ENCODE measurements at regions of chr6 and their contacts with region 1.

Region 1: DNA sequence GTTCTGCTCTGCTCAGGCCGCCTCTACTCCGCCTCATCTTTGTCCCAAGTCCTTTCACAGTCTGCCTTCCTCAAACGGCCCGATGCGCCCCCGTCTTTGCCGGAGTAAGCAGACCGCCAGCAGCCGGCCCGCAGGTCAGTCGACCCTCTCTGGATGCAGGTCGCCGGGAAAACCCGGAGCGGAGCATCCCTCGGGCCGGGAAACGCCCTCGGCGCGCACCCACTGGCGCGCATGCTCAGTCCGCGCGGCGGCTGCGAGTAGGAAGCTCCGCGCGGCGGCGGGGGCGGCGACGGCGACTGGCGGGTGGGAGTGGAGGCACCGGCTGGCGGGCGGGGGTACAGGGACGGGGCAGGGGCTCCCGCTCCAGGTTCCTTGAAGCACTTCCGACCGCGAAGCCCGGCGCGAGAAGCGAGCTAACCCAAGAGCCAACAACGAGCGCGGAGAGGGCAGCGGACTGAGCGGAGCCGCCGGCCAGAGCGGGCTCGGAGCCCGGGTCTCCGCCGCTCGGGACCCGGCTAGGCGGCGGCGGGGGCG is at the start of gene LRRC1:
- DNase-seq: peak; percentile 95
- H3K4me3 ChIP-seq: peak within 1 kb of the TSS; percentile 80
- H3K27ac ChIP-seq: peak within 1 kb of the TSS; percentile 81
- H3K4me1 ChIP-seq: no peaks in the 10 kb centered on the region
- H3K27me3 ChIP-seq: no peaks in the 10 kb centered on the region
- CTCF ChIP-seq: no peak
- total RNA-seq, gene LRRC1: 49.6 to 72.9 TPM

Region 2: DNA sequence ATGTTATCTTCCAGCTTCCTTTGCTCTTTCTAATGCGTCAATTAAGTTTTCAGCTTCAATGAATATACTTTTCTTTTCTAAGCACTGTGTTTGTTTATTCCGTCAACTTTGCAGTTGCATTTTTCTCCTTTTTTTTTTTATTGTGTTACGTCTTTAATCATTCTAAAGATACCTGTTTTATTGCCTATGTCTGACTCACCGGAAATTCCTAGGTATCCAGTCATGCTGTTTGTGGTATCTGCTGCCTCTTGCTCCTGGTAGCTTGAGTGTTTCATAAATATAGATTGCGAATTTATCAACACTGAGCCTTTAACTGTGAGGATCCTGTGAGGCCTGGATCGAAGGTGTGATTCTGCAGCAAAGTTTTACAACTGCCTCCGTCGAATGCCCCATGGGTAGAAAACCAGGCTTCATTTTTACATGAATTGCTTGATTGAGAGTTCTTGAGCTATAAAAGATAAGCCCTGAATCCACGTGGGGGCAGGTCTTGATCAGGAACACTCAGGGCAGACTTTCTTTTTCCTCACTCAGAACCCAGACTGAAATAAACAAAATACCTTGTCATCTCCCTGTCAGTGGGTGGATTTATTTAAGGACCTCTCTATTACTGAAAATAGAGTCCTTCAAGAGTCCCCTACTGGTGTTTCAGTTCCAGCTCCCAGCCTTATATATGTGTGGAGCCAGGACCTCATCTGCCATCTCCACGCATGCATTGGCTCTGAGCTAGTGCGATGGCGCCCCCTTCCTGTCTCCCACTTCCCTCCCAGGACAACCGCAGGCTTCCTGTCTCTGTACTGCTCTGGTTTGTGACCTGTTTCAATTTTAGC is 60.1 kb before region 1 on chr6:
- intact Hi-C with region 1: loop called (anchors 5 kb)
- DNase-seq: peak; percentile 68
- H3K4me3 ChIP-seq: no peak overlapping the region
- H3K27ac ChIP-seq: peak overlapping the region; percentile 67
- H3K4me1 ChIP-seq: no peaks in the 10 kb centered on the region
- H3K27me3 ChIP-seq: no peaks in the 10 kb centered on the region
- CTCF ChIP-seq: peak; percentile 36

Region 3: DNA sequence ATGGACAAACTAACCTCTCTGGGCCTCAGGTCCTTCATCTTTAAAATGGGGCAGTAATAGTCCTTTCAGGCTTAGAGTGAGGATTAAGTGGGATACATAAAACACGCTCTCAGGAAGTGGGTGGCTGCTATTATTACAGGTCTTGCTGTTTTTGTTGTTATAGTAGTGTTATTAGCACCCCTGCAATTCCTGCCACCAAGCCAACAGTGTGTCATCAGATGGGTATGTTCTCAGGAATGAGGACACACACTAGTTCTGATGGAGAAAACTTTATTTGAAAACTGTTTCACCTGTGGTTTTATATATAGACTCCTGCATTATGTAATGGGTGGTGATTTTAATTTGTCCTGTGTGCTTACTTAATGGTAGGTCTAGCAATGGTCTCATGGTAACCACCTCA is 131.7 kb after region 1 on chr6:
- intact Hi-C with region 1: loop called (anchors 10 kb)
- DNase-seq: no peak
- H3K4me3 ChIP-seq: no peak overlapping the region
- H3K27ac ChIP-seq: no peak overlapping the region
- H3K4me1 ChIP-seq: peaks cover 13% of the 10 kb centered on the region
- H3K27me3 ChIP-seq: no peaks in the 10 kb centered on the region
- CTCF ChIP-seq: no peak

Region 4: DNA sequence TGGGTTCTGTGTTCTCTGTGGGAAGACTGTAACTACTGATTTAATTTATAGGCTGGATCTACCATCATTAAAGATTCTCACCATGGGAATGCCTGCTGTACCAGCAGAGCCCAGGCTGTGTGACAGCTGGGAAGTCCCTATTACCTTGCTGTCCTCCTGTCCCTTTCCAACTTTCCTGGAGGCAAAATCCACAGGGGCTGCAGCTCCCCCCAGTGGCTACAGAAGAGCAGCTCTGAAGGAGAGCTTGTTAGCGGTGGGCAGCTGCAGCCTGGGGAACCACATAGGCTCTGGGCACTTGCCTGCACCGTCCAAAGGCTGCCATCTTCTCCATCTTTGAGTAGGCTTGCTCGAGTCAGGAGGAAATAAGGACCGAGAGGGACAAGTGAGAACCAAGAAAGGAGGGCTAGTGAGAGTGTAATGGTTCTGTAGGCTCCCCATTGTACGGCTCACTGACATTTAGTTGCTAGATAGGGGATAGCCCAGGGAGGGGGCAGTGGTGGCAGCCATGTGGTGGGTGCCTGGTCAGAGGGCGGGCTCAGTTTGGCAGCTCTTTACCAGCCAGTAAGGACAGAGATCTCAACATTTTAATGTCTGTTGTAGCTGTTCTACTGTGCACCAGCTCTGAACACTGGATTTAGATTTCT is 161.4 kb after region 1 on chr6:
- intact Hi-C with region 1: loop called (anchors 1 kb)
- DNase-seq: peak; percentile 77
- H3K4me3 ChIP-seq: no peak overlapping the region
- H3K27ac ChIP-seq: no peak overlapping the region
- H3K4me1 ChIP-seq: no peaks in the 10 kb centered on the region
- H3K27me3 ChIP-seq: no peaks in the 10 kb centered on the region
- CTCF ChIP-seq: peak; percentile 68